HCT116 (cell line): ENCODE measurements at regions of chr4 and their contacts with region 1.

Region 1: DNA sequence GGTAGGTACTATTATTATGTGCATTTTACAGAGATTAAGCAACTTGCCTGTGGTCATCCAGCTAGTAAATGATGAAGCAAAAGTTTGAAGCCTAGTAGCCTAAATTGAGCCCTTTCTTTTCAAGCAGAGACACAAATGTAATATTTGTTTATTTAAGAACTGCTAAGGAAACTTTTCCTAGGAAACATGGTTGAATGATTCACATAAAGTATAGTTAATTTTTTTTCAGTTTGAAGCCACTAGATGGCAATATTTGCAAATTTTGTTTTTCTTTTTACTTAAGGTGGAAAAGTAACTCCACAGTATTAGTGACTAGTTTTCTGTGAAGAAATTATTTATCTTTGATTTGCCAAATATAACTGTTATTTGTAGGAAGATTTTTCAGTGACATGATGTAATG is 52.8 kb upstream of the ANKRD17 start:
- DNase-seq: peak; percentile 8
- ATAC-seq: no peak
- H3K4me3 ChIP-seq: no peak overlapping the region
- H3K27ac ChIP-seq: no peak overlapping the region
- H3K4me1 ChIP-seq: no peaks in the 10 kb centered on the region
- H3K27me3 ChIP-seq: no peaks in the 10 kb centered on the region
- CTCF ChIP-seq: peak; percentile 12 to 60 (median 42); a peak in 3 of 6 replicates
- POLR2A ChIP-seq: no peak
- RAD21 ChIP-seq: peak; percentile 55

Region 2: GRCh38 chr4:72366601-72367000 is 944.8 kb before region 1 on chr4:
- CTCF ChIA-PET with region 1: no interaction called
- POLR2A ChIA-PET with region 1: no interaction called
- RAD21 ChIA-PET with region 1: no interaction called
- intact Hi-C with region 1: no loop called
- DNase-seq: no peak
- ATAC-seq: no peak
- H3K4me3 ChIP-seq: no peak overlapping the region
- H3K27ac ChIP-seq: no peak overlapping the region
- H3K4me1 ChIP-seq: no peaks in the 10 kb centered on the region
- H3K27me3 ChIP-seq: no peaks in the 10 kb centered on the region
- CTCF ChIP-seq: no peak
- POLR2A ChIP-seq: no peak
- RAD21 ChIP-seq: no peak

Region 3: GRCh38 chr4:72951147-72951546 is 360.3 kb before region 1 on chr4:
- CTCF ChIA-PET with region 1: no interaction called
- POLR2A ChIA-PET with region 1: no interaction called
- RAD21 ChIA-PET with region 1: no interaction called
- intact Hi-C with region 1: no loop called
- DNase-seq: no peak
- ATAC-seq: peak; percentile 73
- H3K4me3 ChIP-seq: no peak overlapping the region
- H3K27ac ChIP-seq: no peak overlapping the region
- H3K4me1 ChIP-seq: no peaks in the 10 kb centered on the region
- H3K27me3 ChIP-seq: 0 out of 2 replicates have a peak, but pooled peaks cover 4% of the 10 kb centered on the region
- CTCF ChIP-seq: peak in 2 of 3 experiments; percentile 22 to 37; a peak in 3 of 6 replicates
- POLR2A ChIP-seq: no peak
- RAD21 ChIP-seq: no peak

Region 4: GRCh38 chr4:73446336-73446938 is 135.0 kb after region 1 on chr4:
- CTCF ChIA-PET with region 1: interaction called, 6 read pairs
- POLR2A ChIA-PET with region 1: no interaction called
- RAD21 ChIA-PET with region 1: no interaction called
- intact Hi-C with region 1: loop called (anchors 10 kb)
- DNase-seq: peak; percentile 48
- ATAC-seq: peak; percentile 97
- H3K4me3 ChIP-seq: no peak overlapping the region
- H3K27ac ChIP-seq: no peak overlapping the region
- H3K4me1 ChIP-seq: no peaks in the 10 kb centered on the region
- H3K27me3 ChIP-seq: no peaks in the 10 kb centered on the region
- CTCF ChIP-seq: peak; percentile 82 to 99 (median 92)
- POLR2A ChIP-seq: no peak
- RAD21 ChIP-seq: peak; percentile 68